Naive thymus-derived CD4-positive, alpha-beta T cell (primary cell): ENCODE measurements at regions of chr12 and their contacts with region 1.

Region 1: GRCh38 chr12:53159195-53159839 is 21.2 kb upstream of the ZNF740 start:
- DNase-seq: peak; percentile 72 to 91 (median 85)
- ATAC-seq: peak; percentile 100
- H3K4me3 ChIP-seq: no peak overlapping the region
- H3K4me3 Mint-ChIP-seq: peak overlapping the region in 1 of 10 donors; percentile 24
- H3K27ac ChIP-seq: no peak overlapping the region
- H3K27ac Mint-ChIP-seq: peak overlapping the region in 6 of 9 donors; percentile 26 to 66 (median 52)
- H3K4me1 ChIP-seq: peaks cover 5 to 7% of the 10 kb centered on the region in 2 donors
- H3K4me1 Mint-ChIP-seq: peaks cover 4 to 12% (median 7%) of the 10 kb centered on the region in 7 donors
- H3K27me3 ChIP-seq: no peaks in the 10 kb centered on the region
- H3K27me3 Mint-ChIP-seq: no peaks in the 10 kb centered on the region

Region 2: GRCh38 chr12:53190108-53190729 is 30.9 kb after region 1 on chr12:
- CTCF ChIA-PET with region 1: interaction called, 41 read pairs
- POLR2A ChIA-PET with region 1: interaction called, 4 read pairs
- intact Hi-C with region 1: loop called in 1 of 2 experiments (anchors 1 kb)
- DNase-seq: peak in 7 of 9 donors; percentile 42 to 57 (median 52)
- ATAC-seq: peak; percentile 85
- H3K4me3 ChIP-seq: no peak overlapping the region
- H3K4me3 Mint-ChIP-seq: peak overlapping the region in 1 of 10 donors; percentile 25
- H3K27ac ChIP-seq: peak overlapping the region; percentile 37
- H3K27ac Mint-ChIP-seq: peak overlapping the region in 8 of 9 donors; percentile 36 to 89 (median 68)
- H3K4me1 ChIP-seq: peaks cover 0 to 11% of the 10 kb centered on the region in 2 donors
- H3K4me1 Mint-ChIP-seq: peaks cover 9 to 55% (median 30%) of the 10 kb centered on the region in 7 donors
- H3K27me3 ChIP-seq: no peaks in the 10 kb centered on the region
- H3K27me3 Mint-ChIP-seq: no peaks in the 10 kb centered on the region

Region 3: DNA sequence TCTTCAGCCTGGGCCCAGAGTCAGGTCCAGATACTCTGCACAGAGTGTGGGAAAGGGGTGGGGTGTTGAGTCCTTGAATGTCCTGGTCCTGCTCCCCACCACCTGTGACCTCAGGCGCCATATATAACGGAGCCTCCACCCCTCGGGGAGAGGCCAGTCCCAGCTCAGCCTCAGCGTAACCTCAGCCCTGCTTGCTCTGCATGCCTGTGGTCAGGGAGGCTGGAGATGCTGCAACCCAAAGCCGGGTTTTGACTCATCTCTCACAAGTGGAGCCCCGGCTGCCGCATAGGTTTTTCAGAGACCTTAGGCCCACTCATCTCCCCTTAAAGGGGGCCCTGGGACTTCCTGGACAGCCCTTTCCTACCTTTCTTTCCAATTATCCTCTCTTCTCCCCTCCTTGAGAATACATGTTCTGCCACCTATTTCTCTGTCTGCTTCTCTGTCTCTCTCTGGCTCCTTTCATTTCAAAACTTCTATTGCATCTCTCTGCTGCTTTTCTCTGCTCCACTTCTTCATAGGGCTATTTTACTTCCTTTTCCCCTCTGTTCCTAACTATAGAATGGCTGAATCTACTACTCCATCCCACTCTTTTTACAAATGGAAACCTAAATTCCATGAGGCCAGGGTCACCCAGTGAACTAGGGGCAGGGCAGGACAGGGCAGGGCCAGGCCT is 46.6 kb after region 1 on chr12:
- CTCF ChIA-PET with region 1: interaction called, 50 read pairs
- POLR2A ChIA-PET with region 1: interaction called, 7 read pairs
- intact Hi-C with region 1: loop called in 1 of 2 experiments (anchors 1 kb)
- DNase-seq: peak in 1 of 9 donors; percentile 75
- ATAC-seq: peak; percentile 68
- H3K4me3 ChIP-seq: peak overlapping the region; percentile 84
- H3K4me3 Mint-ChIP-seq: peak overlapping the region; percentile 83 to 92 (median 86)
- H3K27ac ChIP-seq: peak overlapping the region; percentile 85
- H3K27ac Mint-ChIP-seq: peak overlapping the region; percentile 61 to 90 (median 87)
- H3K4me1 ChIP-seq: peaks cover 63 to 73% of the 10 kb centered on the region in 2 donors
- H3K4me1 Mint-ChIP-seq: peaks cover 53 to 84% (median 71%) of the 10 kb centered on the region in 7 donors
- H3K27me3 ChIP-seq: no peaks in the 10 kb centered on the region
- H3K27me3 Mint-ChIP-seq: no peaks in the 10 kb centered on the region

Region 4: DNA sequence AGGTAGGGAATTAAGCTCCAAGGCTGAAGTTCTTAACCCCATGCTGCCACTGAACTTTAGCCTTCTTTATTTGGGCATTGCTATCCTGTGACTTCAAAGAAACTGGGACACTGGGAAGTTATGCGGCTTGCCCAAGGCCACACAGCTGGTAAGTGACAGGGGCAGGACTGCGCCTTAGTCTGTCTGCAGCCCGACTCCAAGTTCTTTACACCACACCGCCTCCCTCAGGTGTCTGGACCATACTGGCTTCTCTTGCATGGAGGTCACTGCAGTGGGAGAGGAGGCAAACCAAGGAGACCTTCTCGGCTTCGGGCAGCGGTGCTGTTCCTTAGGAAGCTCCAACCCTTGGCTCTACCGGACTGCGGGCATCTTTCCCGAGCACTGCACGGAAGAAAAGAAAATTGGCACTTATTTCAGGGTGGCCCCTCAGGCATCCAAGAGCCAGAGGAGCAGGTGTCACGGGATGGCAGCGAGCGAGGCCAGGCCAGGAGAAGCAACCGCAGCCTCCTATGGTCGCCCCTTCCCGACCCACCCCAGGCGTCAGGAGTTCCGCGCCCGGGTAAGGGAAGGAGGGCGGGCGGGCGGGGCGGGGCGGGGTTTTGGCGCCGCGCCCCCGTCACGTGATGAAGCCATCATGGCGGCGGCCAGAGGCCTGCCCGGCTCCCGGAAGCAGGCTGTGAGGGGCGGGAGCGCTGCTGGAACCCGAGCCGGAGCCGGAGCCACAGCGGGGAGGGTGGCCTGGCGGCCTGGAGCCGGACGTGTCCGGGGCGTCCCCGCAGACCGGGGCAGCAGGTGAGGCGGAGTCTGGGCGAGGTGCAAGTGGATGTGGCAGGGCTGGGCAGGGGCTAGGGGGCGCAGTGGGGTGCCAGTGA is 92.4 kb after region 1 on chr12:
- CTCF ChIA-PET with region 1: interaction called, 7 read pairs
- POLR2A ChIA-PET with region 1: interaction called, 4 read pairs
- intact Hi-C with region 1: loop called (anchors 1 kb)
- DNase-seq: peak; percentile 58 to 81 (median 69)
- ATAC-seq: peak; percentile 90
- H3K4me3 ChIP-seq: peak overlapping the region; percentile 95
- H3K4me3 Mint-ChIP-seq: peak overlapping the region; percentile 89 to 98 (median 96)
- H3K27ac ChIP-seq: peak overlapping the region; percentile 95
- H3K27ac Mint-ChIP-seq: peak overlapping the region; percentile 84 to 97 (median 94)
- H3K4me1 ChIP-seq: peaks cover 26 to 38% of the 10 kb centered on the region in 2 donors
- H3K4me1 Mint-ChIP-seq: peaks cover 37 to 59% (median 48%) of the 10 kb centered on the region in 7 donors
- H3K27me3 ChIP-seq: no peaks in the 10 kb centered on the region
- H3K27me3 Mint-ChIP-seq: no peaks in the 10 kb centered on the region

Region 5: GRCh38 chr12:53287741-53288216 is 128.5 kb after region 1 on chr12:
- CTCF ChIA-PET with region 1: interaction called, 62 read pairs
- POLR2A ChIA-PET with region 1: interaction called, 3 read pairs
- intact Hi-C with region 1: loop called (anchors 1 kb)
- DNase-seq: peak; percentile 43 to 76 (median 69)
- ATAC-seq: peak; percentile 94
- H3K4me3 ChIP-seq: no peak overlapping the region
- H3K4me3 Mint-ChIP-seq: no peak overlapping the region
- H3K27ac ChIP-seq: no peak overlapping the region
- H3K27ac Mint-ChIP-seq: peak overlapping the region in 4 of 9 donors; percentile 8 to 86 (median 25)
- H3K4me1 ChIP-seq: no peaks in the 10 kb centered on the region
- H3K4me1 Mint-ChIP-seq: peaks cover 4 to 11% (median 5%) of the 10 kb centered on the region in 7 donors
- H3K27me3 ChIP-seq: no peaks in the 10 kb centered on the region
- H3K27me3 Mint-ChIP-seq: no peaks in the 10 kb centered on the region

Region 6: DNA sequence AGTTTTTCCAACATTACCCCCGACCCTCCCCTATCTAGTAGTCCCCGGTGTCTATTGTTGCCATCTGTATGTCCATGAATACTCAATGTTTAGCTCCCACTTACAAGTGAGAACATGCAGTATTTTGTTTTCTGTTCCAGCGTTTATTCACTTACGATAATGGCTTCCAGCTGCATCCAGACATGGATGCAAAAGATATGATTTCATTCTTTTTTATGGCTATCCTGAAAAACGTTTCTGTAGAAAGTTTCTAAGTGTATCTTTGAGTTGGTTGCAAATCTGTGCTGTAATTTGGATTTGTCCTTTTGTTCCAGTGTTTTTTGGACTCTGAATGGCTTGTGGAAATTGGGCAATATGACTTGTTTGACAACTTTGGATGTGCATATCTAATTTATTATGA is 232.4 kb after region 1 on chr12:
- CTCF ChIA-PET with region 1: no interaction called
- POLR2A ChIA-PET with region 1: no interaction called
- intact Hi-C with region 1: no loop called
- DNase-seq: no peak
- ATAC-seq: no peak
- H3K4me3 ChIP-seq: no peak overlapping the region
- H3K4me3 Mint-ChIP-seq: peak overlapping the region in 4 of 10 donors; percentile 16 to 56 (median 39)
- H3K27ac ChIP-seq: no peak overlapping the region
- H3K27ac Mint-ChIP-seq: peak overlapping the region in 5 of 9 donors; percentile 15 to 48 (median 27)
- H3K4me1 ChIP-seq: peaks cover 6 to 28% of the 10 kb centered on the region in 2 donors
- H3K4me1 Mint-ChIP-seq: peaks cover 37 to 59% (median 50%) of the 10 kb centered on the region in 7 donors
- H3K27me3 ChIP-seq: no peaks in the 10 kb centered on the region
- H3K27me3 Mint-ChIP-seq: no peaks in the 10 kb centered on the region